Common myeloid progenitor, CD34-positive (primary cell): ENCODE measurements at regions of chrX and their contacts with region 1.

Region 1: DNA sequence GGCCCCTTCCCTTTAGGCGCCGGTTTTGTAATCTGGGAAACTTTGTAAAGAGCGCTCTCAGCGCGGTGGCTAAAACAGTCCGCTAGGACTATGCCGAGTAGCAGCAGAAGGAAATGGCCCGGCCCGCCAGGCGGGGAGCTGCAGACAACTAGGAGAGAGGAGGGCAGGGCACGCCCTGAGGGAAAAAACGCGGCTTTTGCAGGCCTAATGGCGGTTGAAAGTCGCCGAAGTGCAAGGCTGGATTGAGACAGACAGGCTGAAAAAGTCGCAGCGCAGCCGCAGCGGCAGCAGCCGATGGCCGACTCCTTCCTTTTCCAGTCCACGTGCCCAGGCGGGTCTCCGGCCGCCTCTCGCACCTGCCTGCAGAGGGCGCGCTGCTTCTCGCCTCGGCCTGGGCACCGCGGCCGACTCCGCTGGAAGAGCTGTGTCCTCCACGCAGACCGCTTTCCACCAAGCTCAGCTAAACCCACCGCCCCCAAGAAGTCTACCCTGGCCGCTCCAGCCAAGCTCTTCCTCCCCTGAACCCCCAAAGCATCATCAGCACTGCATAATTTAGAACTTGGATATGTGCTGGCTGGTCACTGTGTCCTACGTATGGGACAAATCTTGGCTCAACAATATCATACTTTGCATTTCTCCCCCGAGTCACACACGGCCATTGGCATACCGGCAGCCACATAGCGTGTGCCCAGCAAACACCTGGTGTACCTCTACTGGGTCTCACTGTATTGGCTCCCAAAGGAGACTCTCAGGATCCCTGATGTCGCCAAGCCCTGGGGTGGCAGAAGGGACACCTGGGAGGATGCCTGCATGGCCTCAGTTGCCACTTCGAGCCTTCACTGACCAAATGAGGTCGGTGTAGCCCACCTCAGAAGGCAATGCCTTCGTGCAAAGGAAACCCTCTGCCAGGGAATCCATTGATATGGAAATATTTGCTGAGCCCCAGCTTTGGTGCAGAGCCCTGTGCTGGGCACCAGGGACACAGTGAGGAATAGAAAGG is 14.5 kb downstream of the SLC25A5 start:
- DNase-seq: peak; percentile 68 to 84 (median 79)
- H3K4me3 ChIP-seq: peak overlapping the region; percentile 12 to 73 (median 43)
- H3K27ac ChIP-seq: peak overlapping the region in 1 of 2 experiments; percentile 5
- H3K4me1 ChIP-seq: peaks cover 0 to 4% (median 1%) of the 10 kb centered on the region in 4 experiments
- H3K27me3 ChIP-seq: peaks cover 0 to 5% (median 0%) of the 10 kb centered on the region in 5 experiments

Region 2: DNA sequence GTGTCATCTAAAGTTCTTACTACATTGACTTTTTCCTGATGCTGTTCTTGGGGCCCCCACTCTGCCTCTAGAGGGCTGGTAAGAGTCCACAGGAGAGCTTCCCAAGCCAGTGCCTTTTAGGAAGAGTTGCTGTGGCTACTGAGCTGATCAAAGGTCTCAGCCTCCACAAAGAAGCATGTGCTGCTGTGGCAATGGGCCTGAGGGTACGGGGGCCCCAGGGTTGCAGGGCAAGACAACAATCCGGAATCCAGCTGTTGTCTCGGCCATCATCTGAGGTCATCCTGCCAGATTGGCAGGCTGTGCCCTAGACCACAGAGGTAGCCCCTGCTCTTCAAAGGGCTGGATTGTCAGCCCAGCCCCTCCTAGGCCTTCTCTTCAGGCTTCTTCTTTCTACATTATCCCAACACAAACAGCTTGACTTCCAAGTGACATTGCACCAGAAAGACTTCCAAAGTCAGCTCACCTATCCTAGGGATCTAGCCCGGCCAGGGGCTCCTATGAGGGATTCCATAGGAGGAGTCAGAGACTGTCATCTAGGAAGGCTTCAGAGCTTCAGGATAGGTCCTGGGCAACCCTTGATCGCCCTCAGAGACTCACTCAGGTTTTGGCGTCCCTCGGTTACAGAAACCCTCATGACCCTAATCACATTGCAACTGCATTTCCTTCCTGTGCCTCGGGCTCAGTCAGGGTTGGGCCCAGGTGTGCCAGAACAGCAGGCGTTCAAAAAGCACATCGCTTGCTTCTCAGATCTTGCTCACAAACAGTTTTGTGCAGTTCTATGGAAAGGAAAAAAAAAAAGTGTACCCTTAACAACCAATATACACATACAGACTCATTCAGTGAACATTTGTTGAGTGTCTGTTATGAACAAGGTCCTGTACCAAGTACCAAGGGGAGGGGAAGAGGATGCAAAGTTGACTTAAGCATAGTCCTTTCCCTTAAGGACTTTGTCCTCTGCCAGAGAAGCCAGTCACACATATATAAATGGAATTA is 13.2 kb after region 1 on chrX:
- CTCF ChIA-PET with region 1: interaction called, 10 read pairs
- POLR2A ChIA-PET with region 1: no interaction called
- DNase-seq: peak in 2 of 3 donors; percentile 53 to 70
- H3K4me3 ChIP-seq: peak overlapping the region in 1 of 7 experiments; percentile 11
- H3K27ac ChIP-seq: peak overlapping the region in 1 of 2 experiments; percentile 14
- H3K4me1 ChIP-seq: peaks cover 5 to 24% (median 18%) of the 10 kb centered on the region in 4 experiments
- H3K27me3 ChIP-seq: no peaks in the 10 kb centered on the region